Activated CD4-positive, alpha-beta T cell treated with anti-CD3 and anti-CD28 coated beads, Interleukin-2, amount 10 ng/mL, durations not matched to agents 24 days and 14 days (primary cell): ENCODE measurements at regions of chr13 and their contacts with region 1.

Region 1: DNA sequence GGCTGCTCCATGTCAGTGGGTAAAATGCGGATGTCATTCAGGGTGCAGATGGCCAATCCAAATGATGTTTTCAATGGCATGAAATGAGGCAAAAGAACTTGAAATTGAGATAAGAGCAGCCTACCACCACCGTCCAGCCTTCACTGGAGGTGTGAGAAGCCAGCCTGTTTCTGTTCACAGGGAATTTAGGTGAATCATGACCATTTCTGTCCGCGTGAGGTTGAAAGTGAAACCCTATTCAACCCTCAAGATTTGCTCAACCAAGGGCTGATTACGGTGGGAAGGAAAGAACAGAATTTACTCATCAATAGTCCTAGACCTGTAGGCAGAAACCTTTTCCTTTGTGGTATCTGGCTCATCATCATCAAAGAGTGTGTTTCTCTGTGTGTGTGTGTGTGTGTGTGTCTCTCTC is 370.7 kb downstream of the COG6 start:
- DNase-seq: peak; percentile 91
- H3K4me3 Mint-ChIP-seq: peak overlapping the region; percentile 57
- H3K27ac Mint-ChIP-seq: peak overlapping the region; percentile 62
- H3K4me1 Mint-ChIP-seq: peaks cover 35% of the 10 kb centered on the region
- H3K27me3 Mint-ChIP-seq: peaks cover 10% of the 10 kb centered on the region

Region 2: GRCh38 chr13:39777527-39778061 is 248.6 kb before region 1 on chr13:
- intact Hi-C with region 1: loop called (anchors 1 kb)
- DNase-seq: peak; percentile 72
- H3K4me3 Mint-ChIP-seq: peak overlapping the region; percentile 47
- H3K27ac Mint-ChIP-seq: peak overlapping the region; percentile 92
- H3K4me1 Mint-ChIP-seq: peaks cover 36% of the 10 kb centered on the region
- H3K27me3 Mint-ChIP-seq: no peaks in the 10 kb centered on the region

Region 3: DNA sequence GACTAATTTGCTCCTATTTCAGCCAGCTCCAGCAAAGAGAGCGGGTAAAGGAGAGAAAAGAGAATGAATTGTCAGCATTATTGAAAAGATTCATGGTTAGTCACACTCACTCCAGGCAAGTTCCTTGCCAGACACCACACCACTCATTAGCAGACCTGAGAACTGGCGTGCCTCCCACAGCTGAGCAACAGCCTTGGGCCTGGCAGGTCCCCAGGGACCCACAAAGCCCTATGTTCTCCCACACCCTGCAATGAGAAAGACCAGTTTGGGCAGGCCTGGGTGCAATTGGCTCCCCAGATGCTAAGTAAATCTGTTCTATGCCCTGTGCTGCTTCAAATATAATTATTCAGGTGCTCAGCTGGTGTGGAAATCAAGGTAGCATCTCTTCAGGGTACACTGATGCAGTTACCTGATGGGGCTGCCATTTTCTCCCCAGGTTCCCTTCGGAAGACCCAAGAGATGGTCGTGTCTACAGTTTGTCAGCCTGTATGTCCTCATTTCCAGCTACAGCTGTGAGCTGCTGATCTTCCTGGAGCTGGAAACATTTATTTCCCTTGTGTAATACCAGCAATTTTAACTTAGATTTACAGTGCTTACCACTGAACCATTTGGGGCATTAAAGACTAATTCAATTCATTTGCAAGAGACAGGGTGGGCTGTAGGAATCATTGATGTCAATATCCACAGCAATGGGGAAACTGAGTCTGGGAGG is 34.3 kb after region 1 on chr13:
- intact Hi-C with region 1: loop called (anchors 2 kb)
- DNase-seq: peak; percentile 53
- H3K4me3 Mint-ChIP-seq: no peak overlapping the region
- H3K27ac Mint-ChIP-seq: peak overlapping the region; percentile 55
- H3K4me1 Mint-ChIP-seq: peaks cover 35% of the 10 kb centered on the region
- H3K27me3 Mint-ChIP-seq: no peaks in the 10 kb centered on the region

Region 4: GRCh38 chr13:40190641-40191100 is 164.5 kb after region 1 on chr13:
- intact Hi-C with region 1: loop called (anchors 2 kb)
- DNase-seq: peak; percentile 90
- H3K4me3 Mint-ChIP-seq: peak overlapping the region; percentile 83
- H3K27ac Mint-ChIP-seq: peak overlapping the region; percentile 92
- H3K4me1 Mint-ChIP-seq: peaks cover 64% of the 10 kb centered on the region
- H3K27me3 Mint-ChIP-seq: no peaks in the 10 kb centered on the region

Region 5: GRCh38 chr13:40485611-40486517 is 459.7 kb after region 1 on chr13:
- intact Hi-C with region 1: loop called (anchors 2 kb)
- DNase-seq: peak; percentile 87
- H3K4me3 Mint-ChIP-seq: peak overlapping the region; percentile 69
- H3K27ac Mint-ChIP-seq: peak overlapping the region; percentile 90
- H3K4me1 Mint-ChIP-seq: peaks cover 55% of the 10 kb centered on the region
- H3K27me3 Mint-ChIP-seq: no peaks in the 10 kb centered on the region

Region 6: GRCh38 chr13:40777166-40777808 is 751.1 kb after region 1 on chr13:
- intact Hi-C with region 1: loop called (anchors 5 kb)
- DNase-seq: peak; percentile 84
- H3K4me3 Mint-ChIP-seq: peak overlapping the region; percentile 77
- H3K27ac Mint-ChIP-seq: peak overlapping the region; percentile 99
- H3K4me1 Mint-ChIP-seq: peaks cover 33% of the 10 kb centered on the region
- H3K27me3 Mint-ChIP-seq: no peaks in the 10 kb centered on the region